ENCODE measurements at regions of chr1 and their contacts with region 1.

Region 1: DNA sequence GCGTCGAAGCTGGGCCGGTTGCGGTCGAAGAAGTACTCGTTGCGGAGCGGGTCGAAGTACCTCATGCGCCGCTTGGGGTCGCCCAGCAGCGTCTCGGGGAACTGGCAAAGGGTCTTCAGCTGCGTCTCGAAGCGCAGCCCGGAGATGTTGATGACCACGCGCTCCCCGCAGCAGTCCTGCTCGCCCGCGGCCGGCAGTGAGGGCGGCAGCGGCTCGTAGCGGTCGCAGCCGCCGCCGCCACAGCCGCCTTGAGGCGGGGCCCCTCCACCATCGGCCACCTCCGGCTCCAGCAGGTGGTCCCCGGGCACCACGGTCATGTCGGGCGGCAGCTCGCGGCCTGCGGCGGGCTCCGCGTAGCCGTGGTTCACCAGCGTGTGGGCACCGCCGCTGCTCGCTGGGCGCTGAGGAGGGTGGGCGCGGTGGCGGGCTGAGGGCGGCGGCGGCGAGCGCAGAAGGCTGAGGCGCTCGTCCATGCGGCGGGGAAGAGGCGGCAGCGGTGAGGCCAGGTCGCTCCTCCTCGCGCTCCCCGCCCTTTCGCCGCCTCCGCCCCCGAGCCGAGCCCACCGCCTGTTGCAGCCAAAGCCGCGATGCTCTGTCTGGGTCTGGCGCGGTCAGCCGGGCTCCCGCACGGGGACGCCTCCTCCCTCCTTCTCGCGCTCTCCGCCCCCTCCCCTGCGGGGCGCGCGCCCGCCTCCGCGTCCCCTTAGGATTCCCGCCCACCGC is at the start of gene KCNA3:
- DNase-seq: peak in 40 of 42 donors; percentile 24 to 75 (median 60)

Region 2: DNA sequence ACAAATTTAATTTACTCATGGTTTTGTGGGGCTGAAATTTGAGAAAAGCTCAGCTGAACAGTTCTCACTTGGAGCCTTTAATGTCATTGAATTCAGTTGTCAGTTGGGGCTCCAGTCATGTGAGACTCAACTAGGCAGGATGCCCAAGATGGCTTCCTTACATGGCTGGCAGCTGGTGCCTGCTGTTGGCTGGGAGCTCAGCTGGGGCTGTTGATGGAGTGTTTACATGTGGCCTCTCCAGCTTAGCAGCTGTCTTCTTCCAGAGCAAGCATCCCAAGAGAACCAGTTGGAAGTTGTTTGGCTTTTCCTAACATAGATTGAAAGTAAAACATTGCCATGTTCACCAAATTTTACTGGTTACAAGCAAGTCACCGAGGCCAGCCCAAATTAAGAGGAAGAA is 82.0 kb after region 1 on chr1:
- intact Hi-C with region 1: loop called (anchors 10 kb)
- DNase-seq: peak in 41 of 42 donors; percentile 21 to 81 (median 61)